Activated CD4-positive, alpha-beta memory T cell treated with anti-CD3 and anti-CD28 coated beads for 36 hours (primary cell): ENCODE measurements at regions of chr1 and their contacts with region 1.

Region 1: GRCh38 chr1:201436393-201436792 is 14.9 kb upstream of the TNNI1 start:
- DNase-seq: no peak
- H3K4me3 Mint-ChIP-seq: no peak overlapping the region
- H3K27ac Mint-ChIP-seq: no peak overlapping the region
- H3K4me1 Mint-ChIP-seq: peaks cover 5% of the 10 kb centered on the region
- H3K27me3 Mint-ChIP-seq: peaks cover 18% of the 10 kb centered on the region

Region 2: GRCh38 chr1:201320163-201320788 is 116.1 kb before region 1 on chr1:
- CTCF ChIA-PET with region 1: no interaction called
- POLR2A ChIA-PET with region 1: no interaction called
- intact Hi-C with region 1: no loop called
- DNase-seq: no peak
- H3K4me3 Mint-ChIP-seq: no peak overlapping the region
- H3K27ac Mint-ChIP-seq: no peak overlapping the region
- H3K4me1 Mint-ChIP-seq: no peaks in the 10 kb centered on the region
- H3K27me3 Mint-ChIP-seq: peaks cover 3% of the 10 kb centered on the region

Region 3: GRCh38 chr1:201447911-201448871 is 11.8 kb after region 1 on chr1:
- CTCF ChIA-PET with region 1: interaction called, 35 read pairs
- POLR2A ChIA-PET with region 1: interaction called, 4 read pairs
- intact Hi-C with region 1: no loop called
- DNase-seq: peak; percentile 82
- H3K4me3 Mint-ChIP-seq: no peak overlapping the region
- H3K27ac Mint-ChIP-seq: no peak overlapping the region
- H3K4me1 Mint-ChIP-seq: peaks cover 2% of the 10 kb centered on the region
- H3K27me3 Mint-ChIP-seq: peaks cover 15% of the 10 kb centered on the region

Region 4: GRCh38 chr1:201456499-201457309 is 20.3 kb after region 1 on chr1:
- CTCF ChIA-PET with region 1: interaction called, 14 read pairs
- POLR2A ChIA-PET with region 1: interaction called, 3 read pairs
- intact Hi-C with region 1: no loop called
- DNase-seq: no peak
- H3K4me3 Mint-ChIP-seq: no peak overlapping the region
- H3K27ac Mint-ChIP-seq: no peak overlapping the region
- H3K4me1 Mint-ChIP-seq: peaks cover 10% of the 10 kb centered on the region
- H3K27me3 Mint-ChIP-seq: peaks cover 8% of the 10 kb centered on the region